Naive thymus-derived CD8-positive, alpha-beta T cell (primary cell): ENCODE measurements at regions of chr18 and their contacts with region 1.

Region 1: GRCh38 chr18:12376718-12377555 is at the start of gene AFG3L2:
- DNase-seq: peak; percentile 99 to 100 (median 100)
- ATAC-seq: peak; percentile 84 to 87
- H3K4me3 Mint-ChIP-seq: peak within 1 kb of the TSS; percentile 86 to 94 (median 92)
- H3K27ac Mint-ChIP-seq: peak within 1 kb of the TSS; percentile 53 to 94 (median 92)
- H3K4me1 Mint-ChIP-seq: peaks cover 25 to 50% (median 47%) of the 10 kb centered on the region in 4 donors
- H3K27me3 Mint-ChIP-seq: no peaks in the 10 kb centered on the region
- polyA plus RNA-seq, gene AFG3L2: 27.0 to 42.1 (median 37.2) TPM

Region 2: GRCh38 chr18:12391618-12392165 is 14.8 kb after region 1 on chr18:
- POLR2A ChIA-PET with region 1: no interaction called
- DNase-seq: peak in 9 of 10 donors; percentile 22 to 75 (median 51)
- ATAC-seq: peak; percentile 93 to 96
- H3K4me3 Mint-ChIP-seq: no peak overlapping the region
- H3K27ac Mint-ChIP-seq: no peak overlapping the region
- H3K4me1 Mint-ChIP-seq: no peaks in the 10 kb centered on the region
- H3K27me3 Mint-ChIP-seq: peaks cover 0 to 14% (median 10%) of the 10 kb centered on the region in 5 donors

Region 3: GRCh38 chr18:12408247-12408869 is 31.4 kb after region 1 on chr18:
- POLR2A ChIA-PET with region 1: interaction called, 25 read pairs
- DNase-seq: peak in 5 of 10 donors; percentile 6 to 28 (median 9)
- ATAC-seq: peak; percentile 28
- H3K4me3 Mint-ChIP-seq: peak overlapping the region; percentile 54 to 85 (median 76)
- H3K27ac Mint-ChIP-seq: peak overlapping the region in 8 of 10 donors; percentile 25 to 58 (median 50)
- H3K4me1 Mint-ChIP-seq: peaks cover 8 to 22% (median 20%) of the 10 kb centered on the region in 4 donors
- H3K27me3 Mint-ChIP-seq: peaks cover 6 to 13% (median 8%) of the 10 kb centered on the region in 5 donors

Region 4: DNA sequence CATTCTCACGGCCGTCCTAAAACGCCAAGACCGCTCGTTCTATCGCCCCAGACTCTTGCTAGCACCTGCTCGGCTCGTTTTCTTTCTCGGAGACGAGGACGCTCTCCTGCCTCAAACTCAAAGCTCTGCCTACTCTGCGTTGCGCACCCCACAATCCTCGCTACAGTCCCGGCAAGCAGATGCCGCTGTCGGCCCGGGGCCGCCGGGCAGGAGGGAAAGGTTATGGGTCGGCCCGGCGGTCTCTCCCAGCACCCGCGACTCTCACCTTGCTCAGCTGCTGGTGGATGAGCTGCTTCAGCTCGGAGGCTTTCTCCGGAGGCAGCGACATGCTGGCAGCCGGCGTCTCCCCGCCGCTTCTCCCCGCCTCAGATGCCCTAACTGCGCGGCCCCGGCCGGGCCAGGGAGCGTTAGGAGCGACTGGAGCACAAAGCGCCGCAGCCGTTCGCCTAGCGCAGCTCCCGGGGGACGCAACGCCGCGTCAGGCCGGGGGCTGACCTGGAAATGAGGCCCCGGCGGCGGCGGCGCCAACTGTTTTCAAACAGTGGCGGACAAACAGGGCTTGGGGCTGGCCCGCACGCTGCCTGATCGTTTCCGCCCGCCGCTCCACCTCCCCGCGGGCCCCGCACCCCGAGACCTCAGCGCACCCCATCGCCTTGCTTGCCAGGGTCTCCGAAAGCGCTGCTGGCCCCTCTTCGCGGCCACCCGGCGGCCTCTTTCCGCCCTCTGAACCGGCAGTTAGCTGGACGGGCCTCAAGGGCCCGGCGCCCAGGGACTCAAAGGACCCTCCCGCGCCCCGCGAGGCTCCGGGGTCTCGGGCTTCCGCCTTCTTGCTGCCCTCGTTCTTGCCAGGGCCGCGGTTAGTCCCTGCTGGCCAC is 325.5 kb after region 1 on chr18 and contains the starts of genes CEP76 and PSMG2:
- POLR2A ChIA-PET with region 1: interaction called, 24 read pairs
- DNase-seq: peak; percentile 74 to 96 (median 82)
- ATAC-seq: peak; percentile 80 to 85
- H3K4me3 Mint-ChIP-seq: peak within 1 kb of the TSS; percentile 90 to 99 (median 97)
- H3K27ac Mint-ChIP-seq: peak within 1 kb of the TSS; percentile 96 to 100 (median 99)
- H3K4me1 Mint-ChIP-seq: peaks cover 31 to 57% (median 48%) of the 10 kb centered on the region in 4 donors
- H3K27me3 Mint-ChIP-seq: no peaks in the 10 kb centered on the region
- polyA plus RNA-seq, gene CEP76: 2.9 to 7.3 (median 4.0) TPM
- polyA plus RNA-seq, gene PSMG2: 110 to 117 (median 113) TPM